ENCODE measurements at regions of chr21 and their contacts with region 1.

Region 1: GRCh38 chr21:45074048-45074817 is at the start of gene ADARB1:
- DNase-seq: peak; percentile 63
- H3K4me3 Mint-ChIP-seq: peak within 1 kb of the TSS; percentile 96
- H3K27ac Mint-ChIP-seq: peak within 1 kb of the TSS; percentile 98
- H3K4me1 Mint-ChIP-seq: peaks cover 42% of the 10 kb centered on the region
- H3K27me3 Mint-ChIP-seq: no peaks in the 10 kb centered on the region
- total RNA-seq, gene ADARB1: 24.8 and 25.9 TPM in 2 replicates

Region 2: GRCh38 chr21:44801468-44802395 is 272.5 kb before region 1 on chr21 and contains the start of gene UBE2G2:
- intact Hi-C with region 1: loop called (anchors 10 kb)
- DNase-seq: peak; percentile 87
- H3K4me3 Mint-ChIP-seq: peak within 1 kb of the TSS; percentile 99
- H3K27ac Mint-ChIP-seq: peak within 1 kb of the TSS; percentile 94
- H3K4me1 Mint-ChIP-seq: peaks cover 54% of the 10 kb centered on the region
- H3K27me3 Mint-ChIP-seq: no peaks in the 10 kb centered on the region
- total RNA-seq, gene UBE2G2: 137 and 151 TPM in 2 replicates

Region 3: DNA sequence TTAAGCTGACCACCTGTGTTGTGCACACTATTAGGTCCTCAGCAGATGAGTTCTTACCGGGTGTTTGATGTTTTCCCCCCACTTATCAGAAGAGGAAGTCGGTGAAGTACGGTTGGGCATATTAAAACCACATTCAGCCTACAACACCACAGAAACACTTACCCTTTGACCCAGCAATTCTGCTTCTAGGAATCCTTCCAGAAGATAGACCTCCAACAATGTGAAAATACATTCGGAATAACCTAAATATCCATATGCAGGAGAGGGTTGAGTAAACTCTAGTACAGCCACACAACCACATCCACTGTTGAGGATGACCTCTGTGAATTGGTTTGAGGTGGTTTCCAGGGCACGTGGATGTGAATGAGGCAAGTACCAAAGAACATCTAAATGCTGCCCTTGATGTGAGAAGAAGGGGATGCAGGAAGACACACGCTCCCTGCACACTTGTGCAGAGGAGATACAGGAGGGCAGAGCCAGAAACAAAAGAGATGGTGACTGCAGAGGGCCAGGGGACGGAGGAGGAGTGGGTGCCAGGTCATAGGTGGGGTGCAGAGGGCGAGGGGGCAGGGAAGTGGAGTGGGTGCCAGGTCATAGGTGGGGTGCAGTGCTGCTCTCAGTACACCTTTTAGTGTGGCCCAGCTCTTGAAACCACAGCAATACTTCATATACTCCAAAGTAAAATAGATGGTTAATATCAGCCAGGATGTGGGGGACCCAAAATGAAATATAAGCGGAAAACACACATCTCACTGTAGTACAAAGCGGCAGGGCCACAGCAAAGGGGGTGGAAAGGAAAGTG is 13.0 kb after region 1 on chr21:
- intact Hi-C with region 1: loop called (anchors 1 kb)
- DNase-seq: no peak
- H3K4me3 Mint-ChIP-seq: peak overlapping the region; percentile 34
- H3K27ac Mint-ChIP-seq: peak overlapping the region; percentile 65
- H3K4me1 Mint-ChIP-seq: peaks cover 82% of the 10 kb centered on the region
- H3K27me3 Mint-ChIP-seq: no peaks in the 10 kb centered on the region

Region 4: DNA sequence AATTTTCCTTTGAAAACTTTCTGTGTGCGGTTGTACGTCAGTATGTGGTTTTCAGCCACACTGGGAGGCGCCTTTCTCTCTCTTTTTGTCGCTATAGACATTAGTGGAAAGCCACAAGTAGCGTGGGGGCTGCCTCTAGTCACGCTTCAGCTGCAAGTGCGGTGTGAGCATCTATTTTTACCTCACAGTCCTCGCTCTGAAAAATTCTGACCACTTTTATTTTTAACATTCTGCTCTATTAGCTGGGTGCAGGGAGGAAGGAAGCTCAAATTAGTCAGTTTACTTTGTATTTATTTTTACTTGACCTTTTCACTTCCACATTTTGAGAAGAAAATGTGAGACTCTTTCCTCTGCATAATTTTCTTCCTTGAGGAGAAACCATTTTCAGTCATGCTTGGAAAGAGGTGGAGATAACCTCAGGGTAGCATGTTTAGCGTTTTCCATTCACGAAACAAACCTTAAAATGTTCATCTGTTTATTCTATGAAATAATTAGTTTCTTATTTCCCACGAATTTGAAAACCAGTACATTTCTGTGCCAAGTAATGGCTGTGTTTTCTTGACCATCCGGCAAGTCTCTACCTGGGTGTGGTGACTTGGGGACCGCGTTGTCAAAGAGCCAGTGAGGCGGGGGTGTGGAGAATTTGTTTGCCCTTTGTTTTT is 35.7 kb after region 1 on chr21:
- intact Hi-C with region 1: loop called (anchors 1 kb)
- DNase-seq: peak; percentile 19
- H3K4me3 Mint-ChIP-seq: peak overlapping the region; percentile 41
- H3K27ac Mint-ChIP-seq: peak overlapping the region; percentile 5
- H3K4me1 Mint-ChIP-seq: peaks cover 66% of the 10 kb centered on the region
- H3K27me3 Mint-ChIP-seq: peaks cover 5% of the 10 kb centered on the region

Region 5: DNA sequence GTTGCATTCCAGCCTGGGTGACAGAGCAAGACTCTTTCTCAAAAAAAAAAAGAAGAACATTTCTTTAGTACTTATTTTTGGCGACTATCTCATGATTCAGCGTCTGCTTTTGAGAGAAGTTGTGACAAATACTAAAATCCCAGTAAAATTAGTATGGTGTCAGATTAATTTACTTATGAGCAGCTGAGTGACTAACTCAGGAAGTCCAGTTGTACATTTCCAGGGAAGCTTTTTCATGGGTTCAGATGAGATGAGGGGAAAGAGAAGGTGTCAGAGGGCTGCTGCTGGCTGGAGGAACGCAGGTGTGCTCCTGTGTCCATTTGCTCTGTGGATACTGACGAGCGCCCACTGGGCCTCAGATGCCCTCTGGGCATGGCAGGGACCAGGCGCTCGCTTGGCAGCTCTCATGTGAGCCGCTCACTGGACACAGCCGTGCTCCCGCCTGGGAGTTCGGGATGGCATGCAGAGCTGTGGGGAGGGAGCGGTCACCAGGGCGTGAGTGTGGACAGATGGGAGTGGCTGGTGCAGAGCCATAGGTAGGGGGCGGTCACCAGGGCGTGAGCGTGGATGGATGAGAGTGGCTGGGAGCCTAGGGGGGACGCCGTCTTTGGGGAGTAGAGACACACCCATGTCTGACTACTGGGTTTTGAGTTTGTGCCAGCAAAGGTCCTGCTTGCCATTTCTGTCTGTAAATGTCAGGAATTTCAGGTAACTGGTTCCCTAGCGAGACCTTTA is 55.1 kb after region 1 on chr21:
- intact Hi-C with region 1: loop called (anchors 2 kb)
- DNase-seq: no peak
- H3K4me3 Mint-ChIP-seq: no peak overlapping the region
- H3K27ac Mint-ChIP-seq: no peak overlapping the region
- H3K4me1 Mint-ChIP-seq: peaks cover 10% of the 10 kb centered on the region
- H3K27me3 Mint-ChIP-seq: no peaks in the 10 kb centered on the region